Activated B cell treated with CpG ODN at 0.5 μM for 24 hours (primary cell): ENCODE measurements at regions of chr5 and their contacts with region 1.

Region 1: GRCh38 chr5:180328296-180329137 is 24.6 kb downstream of the GFPT2 start:
- DNase-seq: peak; percentile 70
- ATAC-seq: peak; percentile 75
- H3K4me3 Mint-ChIP-seq: no peak overlapping the region
- H3K27ac Mint-ChIP-seq: no peak overlapping the region
- H3K4me1 Mint-ChIP-seq: no peaks in the 10 kb centered on the region
- H3K27me3 Mint-ChIP-seq: peaks cover 12% of the 10 kb centered on the region
- CTCF ChIP-seq: no peak

Region 2: DNA sequence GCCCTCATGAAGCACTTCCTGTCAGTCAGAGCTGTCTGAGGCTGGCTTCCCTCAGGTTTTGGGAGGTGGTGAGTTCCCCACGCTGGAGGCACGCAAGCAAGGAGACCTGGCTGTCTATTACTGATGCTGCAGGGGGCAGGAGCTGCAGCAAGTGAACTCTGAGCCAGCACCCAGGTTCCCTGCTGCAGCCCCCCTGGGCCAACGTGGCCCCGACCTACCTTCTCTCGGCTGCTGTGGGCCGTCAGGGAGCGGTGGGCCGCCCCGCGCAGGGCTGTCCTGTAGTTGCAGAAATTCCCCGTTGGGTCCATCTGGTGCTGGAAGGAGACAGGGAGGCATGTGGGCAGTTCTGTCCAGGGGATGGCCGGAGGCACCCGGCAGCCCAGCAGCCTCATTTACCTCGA is 210.1 kb before region 1 on chr5:
- CTCF ChIA-PET with region 1: no interaction called
- POLR2A ChIA-PET with region 1: no interaction called
- intact Hi-C with region 1: no loop called
- DNase-seq: peak; percentile 7
- ATAC-seq: no peak
- H3K4me3 Mint-ChIP-seq: no peak overlapping the region
- H3K27ac Mint-ChIP-seq: no peak overlapping the region
- H3K4me1 Mint-ChIP-seq: no peaks in the 10 kb centered on the region
- H3K27me3 Mint-ChIP-seq: no peaks in the 10 kb centered on the region
- CTCF ChIP-seq: no peak

Region 3: DNA sequence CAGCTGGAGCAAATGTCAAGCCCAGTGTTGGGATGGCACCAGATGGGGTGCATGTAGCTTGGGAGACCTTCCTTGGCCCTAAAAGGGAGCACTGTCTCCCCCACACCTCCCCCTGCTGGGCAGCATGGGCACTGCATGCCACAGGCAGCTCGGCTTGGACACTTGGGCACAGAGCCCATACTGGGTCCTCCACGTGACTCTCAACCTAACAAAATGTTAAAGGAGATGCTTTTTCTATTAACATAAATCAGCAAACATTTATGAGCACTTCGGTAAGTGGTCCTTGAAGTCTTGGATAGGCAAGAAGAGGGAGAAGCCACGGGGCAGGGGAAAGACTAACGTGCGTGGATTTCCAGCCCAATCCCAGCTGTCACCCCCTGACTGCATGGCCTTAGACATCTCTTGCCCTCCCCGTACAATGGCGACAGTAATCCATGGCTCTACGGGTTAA is 12.7 kb before region 1 on chr5:
- CTCF ChIA-PET with region 1: interaction called, 17 read pairs
- POLR2A ChIA-PET with region 1: no interaction called
- intact Hi-C with region 1: no loop called
- DNase-seq: peak; percentile 67
- ATAC-seq: peak; percentile 86
- H3K4me3 Mint-ChIP-seq: no peak overlapping the region
- H3K27ac Mint-ChIP-seq: no peak overlapping the region
- H3K4me1 Mint-ChIP-seq: no peaks in the 10 kb centered on the region
- H3K27me3 Mint-ChIP-seq: peaks cover 4% of the 10 kb centered on the region
- CTCF ChIP-seq: peak; percentile 45

Region 4: GRCh38 chr5:180605554-180606214 is 277.2 kb after region 1 on chr5:
- CTCF ChIA-PET with region 1: no interaction called
- POLR2A ChIA-PET with region 1: no interaction called
- intact Hi-C with region 1: no loop called
- DNase-seq: no peak
- ATAC-seq: no peak
- H3K4me3 Mint-ChIP-seq: no peak overlapping the region
- H3K27ac Mint-ChIP-seq: no peak overlapping the region
- H3K4me1 Mint-ChIP-seq: no peaks in the 10 kb centered on the region
- H3K27me3 Mint-ChIP-seq: no peaks in the 10 kb centered on the region
- CTCF ChIP-seq: no peak